ENCODE measurements at regions of chr15 and their contacts with region 1.

Region 1: GRCh38 chr15:80970018-80970658 is 19.5 kb downstream of the MESD start:
- DNase-seq: peak; percentile 67
- H3K4me3 Mint-ChIP-seq: no peak overlapping the region
- H3K27ac Mint-ChIP-seq: no peak overlapping the region
- H3K4me1 Mint-ChIP-seq: peaks cover 9% of the 10 kb centered on the region
- H3K27me3 Mint-ChIP-seq: no peaks in the 10 kb centered on the region

Region 2: GRCh38 chr15:80567721-80568157 is 402.4 kb before region 1 on chr15:
- CTCF ChIA-PET with region 1: interaction called, 24 read pairs
- POLR2A ChIA-PET with region 1: no interaction called
- intact Hi-C with region 1: no loop called
- DNase-seq: peak; percentile 29
- H3K4me3 Mint-ChIP-seq: no peak overlapping the region
- H3K27ac Mint-ChIP-seq: no peak overlapping the region
- H3K4me1 Mint-ChIP-seq: peaks cover 3% of the 10 kb centered on the region
- H3K27me3 Mint-ChIP-seq: peaks cover 25% of the 10 kb centered on the region

Region 3: GRCh38 chr15:80783260-80783659 is 186.9 kb before region 1 on chr15:
- CTCF ChIA-PET with region 1: interaction called, 80 read pairs
- POLR2A ChIA-PET with region 1: no interaction called
- intact Hi-C with region 1: loop called (anchors 1 kb)
- DNase-seq: no peak
- H3K4me3 Mint-ChIP-seq: no peak overlapping the region
- H3K27ac Mint-ChIP-seq: no peak overlapping the region
- H3K4me1 Mint-ChIP-seq: peaks cover 26% of the 10 kb centered on the region
- H3K27me3 Mint-ChIP-seq: peaks cover 28% of the 10 kb centered on the region

Region 4: GRCh38 chr15:80957556-80957955 is 12.6 kb before region 1 on chr15:
- CTCF ChIA-PET with region 1: interaction called, 10 read pairs
- POLR2A ChIA-PET with region 1: no interaction called
- intact Hi-C with region 1: no loop called
- DNase-seq: no peak
- H3K4me3 Mint-ChIP-seq: no peak overlapping the region
- H3K27ac Mint-ChIP-seq: no peak overlapping the region
- H3K4me1 Mint-ChIP-seq: peaks cover 27% of the 10 kb centered on the region
- H3K27me3 Mint-ChIP-seq: no peaks in the 10 kb centered on the region